ENCODE measurements at regions of chr14 and their contacts with region 1.

Region 1: GRCh38 chr14:93939304-93940229 is 12.4 kb downstream of the FAM181A start:
- DNase-seq: peak; percentile 92
- ATAC-seq: peak; percentile 97
- H3K4me3 Mint-ChIP-seq: peak overlapping the region; percentile 46
- H3K27ac Mint-ChIP-seq: peak overlapping the region; percentile 74
- H3K4me1 Mint-ChIP-seq: peaks cover 32% of the 10 kb centered on the region
- H3K27me3 Mint-ChIP-seq: no peaks in the 10 kb centered on the region

Region 2: GRCh38 chr14:93103392-93104080 is 836.0 kb before region 1 on chr14:
- CTCF ChIA-PET with region 1: no interaction called
- DNase-seq: peak; percentile 95
- ATAC-seq: peak; percentile 99
- H3K4me3 Mint-ChIP-seq: peak overlapping the region; percentile 76
- H3K27ac Mint-ChIP-seq: peak overlapping the region; percentile 98
- H3K4me1 Mint-ChIP-seq: peaks cover 52% of the 10 kb centered on the region
- H3K27me3 Mint-ChIP-seq: no peaks in the 10 kb centered on the region

Region 3: DNA sequence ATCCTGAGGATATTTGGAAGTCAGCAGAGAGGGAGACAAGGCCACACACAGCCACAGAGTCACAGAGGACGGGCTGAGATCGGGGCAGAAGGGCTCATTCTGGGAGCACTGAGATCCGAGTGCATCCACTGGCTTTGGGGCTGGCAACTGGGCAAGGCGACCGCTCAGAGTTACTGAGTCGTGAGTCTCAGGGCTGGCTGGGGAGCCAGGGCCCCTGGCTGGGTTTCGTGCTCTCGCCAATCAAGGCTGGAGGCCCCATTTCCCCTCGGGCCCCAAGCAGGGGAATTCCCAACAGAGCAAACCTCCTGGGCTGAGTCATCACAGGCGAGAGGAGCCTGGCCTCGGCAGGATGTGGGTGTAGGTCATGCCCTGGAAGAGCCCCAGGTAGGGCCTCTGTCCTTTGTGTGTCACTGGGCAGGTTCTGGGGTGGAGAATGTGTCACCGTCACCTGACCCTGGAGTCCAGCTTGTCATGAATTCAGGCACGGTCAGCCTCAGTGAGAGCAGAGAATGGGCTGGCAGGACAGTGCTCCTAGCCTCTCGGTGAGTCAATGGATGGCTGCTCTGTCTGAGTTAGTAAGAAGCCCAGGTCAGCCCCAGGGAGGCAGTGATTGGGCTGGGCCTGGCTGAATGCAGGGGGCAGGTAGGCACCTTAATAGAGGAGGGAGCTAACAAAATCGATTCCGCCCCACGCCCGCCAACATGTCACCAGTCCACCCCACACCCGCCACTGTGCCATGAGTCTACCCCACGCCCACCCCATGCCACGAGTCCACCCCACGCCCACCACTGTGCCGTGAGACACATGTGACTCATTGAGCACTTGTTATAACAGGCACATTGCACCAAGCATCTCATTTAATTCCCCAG is 19.9 kb after region 1 on chr14:
- CTCF ChIA-PET with region 1: interaction called, 261 read pairs
- DNase-seq: peak; percentile 98
- ATAC-seq: peak; percentile 71
- H3K4me3 Mint-ChIP-seq: peak overlapping the region; percentile 67
- H3K27ac Mint-ChIP-seq: peak overlapping the region; percentile 99
- H3K4me1 Mint-ChIP-seq: peaks cover 93% of the 10 kb centered on the region
- H3K27me3 Mint-ChIP-seq: no peaks in the 10 kb centered on the region

Region 4: GRCh38 chr14:93991212-93991611 is 51.6 kb after region 1 on chr14:
- CTCF ChIA-PET with region 1: interaction called, 297 read pairs
- DNase-seq: no peak
- ATAC-seq: no peak
- H3K4me3 Mint-ChIP-seq: no peak overlapping the region
- H3K27ac Mint-ChIP-seq: no peak overlapping the region
- H3K4me1 Mint-ChIP-seq: peaks cover 19% of the 10 kb centered on the region
- H3K27me3 Mint-ChIP-seq: no peaks in the 10 kb centered on the region

Region 5: DNA sequence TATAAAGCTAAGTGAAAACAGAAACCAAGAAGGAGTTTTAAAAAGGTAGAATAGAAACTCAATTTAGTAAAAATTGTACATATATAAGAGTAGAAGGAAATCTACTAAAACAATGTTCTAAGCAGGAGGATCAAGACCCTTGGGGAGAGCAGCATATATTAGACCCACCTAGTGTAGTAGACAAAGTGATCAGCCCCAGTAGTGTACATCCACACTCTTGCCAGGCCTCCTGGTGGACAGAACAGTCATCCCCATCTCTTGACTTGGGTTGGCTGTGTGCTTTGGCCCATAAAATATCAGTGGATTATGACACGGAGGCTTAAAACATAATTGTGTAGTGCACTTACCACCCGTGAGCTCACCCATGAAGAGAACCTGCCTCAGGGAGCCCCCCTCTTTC is 75.7 kb after region 1 on chr14:
- CTCF ChIA-PET with region 1: interaction called, 87 read pairs
- DNase-seq: no peak
- ATAC-seq: no peak
- H3K4me3 Mint-ChIP-seq: no peak overlapping the region
- H3K27ac Mint-ChIP-seq: no peak overlapping the region
- H3K4me1 Mint-ChIP-seq: peaks cover 30% of the 10 kb centered on the region
- H3K27me3 Mint-ChIP-seq: peaks cover 13% of the 10 kb centered on the region

Region 6: GRCh38 chr14:94036313-94037050 is 96.9 kb after region 1 on chr14:
- CTCF ChIA-PET with region 1: interaction called, 84 read pairs
- DNase-seq: peak; percentile 86
- ATAC-seq: peak; percentile 97
- H3K4me3 Mint-ChIP-seq: no peak overlapping the region
- H3K27ac Mint-ChIP-seq: no peak overlapping the region
- H3K4me1 Mint-ChIP-seq: peaks cover 5% of the 10 kb centered on the region
- H3K27me3 Mint-ChIP-seq: no peaks in the 10 kb centered on the region

Region 7: DNA sequence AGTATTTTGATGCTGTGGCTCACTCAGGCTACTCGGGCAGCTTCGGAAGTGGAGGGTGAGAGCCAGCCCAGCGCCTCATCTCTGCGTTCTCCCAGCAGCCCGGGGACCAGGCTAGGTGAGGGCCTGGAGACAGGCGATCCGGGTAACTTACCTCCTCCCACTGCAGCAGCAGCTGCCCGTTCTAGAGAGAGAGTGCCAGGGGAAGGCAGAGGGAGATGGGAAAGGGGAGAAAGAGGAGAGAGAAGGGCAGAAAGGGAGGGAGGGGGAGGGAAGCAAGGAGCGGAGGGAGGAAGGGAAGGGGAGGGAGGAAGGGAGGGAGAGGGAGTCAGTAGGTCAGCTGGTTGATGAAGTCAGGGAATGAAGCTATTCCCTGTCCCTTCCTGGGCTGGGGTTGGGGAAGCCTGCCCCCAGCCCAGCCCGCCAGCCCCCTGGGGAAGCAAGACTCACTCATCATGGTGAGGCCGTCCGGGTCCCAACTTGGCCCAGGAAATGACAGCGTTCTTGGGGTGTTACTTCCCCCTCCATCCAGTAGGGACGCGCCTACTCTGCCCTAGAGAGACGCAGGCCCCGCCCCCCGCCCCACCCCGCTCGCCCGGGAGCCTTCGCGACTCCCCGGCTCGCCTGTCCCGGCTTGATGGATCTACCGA is 189.7 kb after region 1 on chr14 and contains the start of gene IFI27L2:
- CTCF ChIA-PET with region 1: interaction called, 37 read pairs
- DNase-seq: peak; percentile 88
- ATAC-seq: peak; percentile 98
- H3K4me3 Mint-ChIP-seq: peak within 1 kb of the TSS; percentile 82
- H3K27ac Mint-ChIP-seq: peak within 1 kb of the TSS; percentile 84
- H3K4me1 Mint-ChIP-seq: peaks cover 23% of the 10 kb centered on the region
- H3K27me3 Mint-ChIP-seq: peaks cover 19% of the 10 kb centered on the region
- total RNA-seq, gene IFI27L2: 95.5 to 112 TPM

Region 8: GRCh38 chr14:94173885-94174603 is 234.5 kb after region 1 on chr14 and contains the start of gene PPP4R4:
- CTCF ChIA-PET with region 1: interaction called, 10 read pairs
- DNase-seq: peak; percentile 91
- ATAC-seq: peak; percentile 93
- H3K4me3 Mint-ChIP-seq: peak within 1 kb of the TSS; percentile 66
- H3K27ac Mint-ChIP-seq: peak within 1 kb of the TSS; percentile 56
- H3K4me1 Mint-ChIP-seq: peaks cover 17% of the 10 kb centered on the region
- H3K27me3 Mint-ChIP-seq: peaks cover 58% of the 10 kb centered on the region
- total RNA-seq, gene PPP4R4: 0.64 to 0.68 TPM

Measured in activated CD8-positive, alpha-beta memory T cell treated with anti-CD3 and anti-CD28 coated beads, Interleukin-2, amount 10 ng/mL, durations not matched to agents 7 days and 5 days (primary cell).